AG04449 (cell line): ENCODE measurements at regions of chr3 and their contacts with region 1.

Region 1: DNA sequence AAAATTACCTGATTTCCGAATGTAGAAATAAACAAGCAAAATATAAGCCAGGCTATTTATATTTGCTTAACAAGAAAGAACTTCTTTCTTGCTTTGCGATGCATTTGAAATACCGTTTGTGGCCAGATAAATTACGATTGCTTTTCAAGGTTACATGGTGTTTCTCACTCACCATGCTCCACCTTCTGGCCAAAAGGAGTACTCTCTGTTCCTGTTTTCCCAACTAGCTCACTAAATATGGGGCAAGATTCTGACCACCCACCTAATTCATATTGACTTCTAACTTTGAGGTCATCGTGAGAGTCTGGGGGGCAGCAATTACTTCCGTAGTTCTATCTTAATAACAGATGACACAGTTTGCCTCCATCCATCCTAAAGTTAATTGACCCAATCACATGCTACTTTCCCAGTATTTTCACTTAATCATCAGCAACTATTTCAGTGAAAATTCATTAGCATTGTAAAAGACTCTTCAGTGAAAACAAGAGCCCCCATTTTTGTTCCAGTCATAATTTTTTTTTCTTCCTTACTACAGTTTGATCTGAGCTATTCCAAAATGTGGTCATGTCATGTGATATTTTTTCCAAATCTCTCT is 25.9 kb downstream of the ACP3 start:
- DNase-seq: no peak
- H3K4me3 ChIP-seq: no peak overlapping the region
- CTCF ChIP-seq: peak; percentile 69

Region 2: GRCh38 chr3:132029182-132029902 is 313.8 kb before region 1 on chr3:
- CTCF ChIA-PET with region 1: no interaction called
- POLR2A ChIA-PET with region 1: no interaction called
- DNase-seq: no peak
- H3K4me3 ChIP-seq: no peak overlapping the region
- CTCF ChIP-seq: peak; percentile 96

Region 3: GRCh38 chr3:132245552-132246142 is 97.5 kb before region 1 on chr3:
- CTCF ChIA-PET with region 1: interaction called, 86 read pairs
- POLR2A ChIA-PET with region 1: no interaction called
- DNase-seq: no peak
- H3K4me3 ChIP-seq: no peak overlapping the region
- CTCF ChIP-seq: no peak

Region 4: GRCh38 chr3:132253262-132253878 is 89.7 kb before region 1 on chr3:
- CTCF ChIA-PET with region 1: interaction called, 94 read pairs
- POLR2A ChIA-PET with region 1: no interaction called
- DNase-seq: no peak
- H3K4me3 ChIP-seq: no peak overlapping the region
- CTCF ChIP-seq: peak; percentile 53

Region 5: GRCh38 chr3:132268956-132269355 is 74.2 kb before region 1 on chr3:
- CTCF ChIA-PET with region 1: interaction called, 12 read pairs
- POLR2A ChIA-PET with region 1: no interaction called
- DNase-seq: no peak
- H3K4me3 ChIP-seq: no peak overlapping the region
- CTCF ChIP-seq: peak; percentile 12

Region 6: DNA sequence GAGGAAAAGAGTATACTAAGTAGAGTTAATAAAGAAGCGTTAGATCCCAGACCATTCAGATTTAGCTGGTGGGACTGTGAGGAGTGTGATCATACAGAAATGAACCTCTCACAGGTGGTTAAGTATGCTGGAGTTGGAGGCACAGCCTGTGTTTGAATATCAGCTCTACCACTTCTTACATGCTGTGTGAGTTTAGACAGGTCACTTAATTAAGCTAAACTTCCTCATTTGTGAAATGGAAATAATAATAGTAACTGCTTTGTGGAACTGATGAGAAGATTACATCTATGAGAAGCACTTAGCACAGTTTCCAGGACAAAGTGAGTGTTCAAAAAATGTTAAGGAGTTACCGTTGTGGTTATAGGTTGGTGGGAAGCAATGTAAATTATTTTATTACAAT is 17.5 kb before region 1 on chr3:
- CTCF ChIA-PET with region 1: interaction called, 10 read pairs
- POLR2A ChIA-PET with region 1: no interaction called
- DNase-seq: no peak
- H3K4me3 ChIP-seq: no peak overlapping the region
- CTCF ChIP-seq: no peak

Region 7: GRCh38 chr3:132332508-132332907 is 10.6 kb before region 1 on chr3:
- CTCF ChIA-PET with region 1: interaction called, 13 read pairs
- POLR2A ChIA-PET with region 1: no interaction called
- DNase-seq: no peak
- H3K4me3 ChIP-seq: no peak overlapping the region
- CTCF ChIP-seq: no peak

Region 8: GRCh38 chr3:132399054-132399929 is 56.2 kb after region 1 on chr3:
- CTCF ChIA-PET with region 1: interaction called, 36 read pairs
- POLR2A ChIA-PET with region 1: no interaction called
- DNase-seq: peak; percentile 7
- H3K4me3 ChIP-seq: no peak overlapping the region
- CTCF ChIP-seq: peak; percentile 63

Region 9: DNA sequence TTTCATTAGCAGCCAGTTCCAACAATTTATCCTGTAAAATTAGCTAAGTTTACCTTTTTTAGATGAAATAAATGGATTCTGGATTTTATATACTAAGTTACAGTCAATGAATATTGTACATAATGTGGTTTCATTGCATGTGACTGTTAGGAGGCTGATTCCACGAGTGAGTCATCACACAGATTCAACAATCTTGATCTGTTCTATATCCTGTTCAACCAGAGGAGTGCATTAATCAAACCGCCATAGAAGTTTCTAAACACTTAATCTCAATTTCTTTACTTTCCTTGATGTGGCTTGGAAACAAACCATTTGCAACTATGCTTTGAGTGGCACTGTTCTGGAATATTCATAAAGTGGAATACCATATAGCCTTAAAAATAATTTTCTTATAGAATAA is 89.5 kb after region 1 on chr3:
- CTCF ChIA-PET with region 1: no interaction called
- POLR2A ChIA-PET with region 1: no interaction called
- DNase-seq: no peak
- H3K4me3 ChIP-seq: no peak overlapping the region
- CTCF ChIP-seq: no peak

Region 10: GRCh38 chr3:132879636-132880035 is 536.5 kb after region 1 on chr3:
- CTCF ChIA-PET with region 1: no interaction called
- POLR2A ChIA-PET with region 1: no interaction called
- DNase-seq: no peak
- H3K4me3 ChIP-seq: no peak overlapping the region
- CTCF ChIP-seq: no peak